Activated naive CD4-positive, alpha-beta T cell treated with anti-CD3 and anti-CD28 coated beads for 36 hours (primary cell): ENCODE measurements at regions of chr6 and their contacts with region 1.

Region 1: GRCh38 chr6:131281471-131282270 is 146.4 kb downstream of the AKAP7 start:
- DNase-seq: peak; percentile 84
- H3K4me3 Mint-ChIP-seq: peak overlapping the region; percentile 75
- H3K27ac Mint-ChIP-seq: peak overlapping the region; percentile 96
- H3K4me1 Mint-ChIP-seq: peaks cover 48% of the 10 kb centered on the region
- H3K27me3 Mint-ChIP-seq: no peaks in the 10 kb centered on the region

Region 2: GRCh38 chr6:131135244-131136020 is 146.2 kb before region 1 on chr6 and contains the start of gene AKAP7:
- CTCF ChIA-PET with region 1: no interaction called
- intact Hi-C with region 1: loop called (anchors 5 kb)
- DNase-seq: peak; percentile 67
- H3K4me3 Mint-ChIP-seq: peak within 1 kb of the TSS; percentile 85
- H3K27ac Mint-ChIP-seq: peak within 1 kb of the TSS; percentile 83
- H3K4me1 Mint-ChIP-seq: peaks cover 13% of the 10 kb centered on the region
- H3K27me3 Mint-ChIP-seq: no peaks in the 10 kb centered on the region
- total RNA-seq, gene AKAP7: 7.3 to 7.5 TPM

Region 3: DNA sequence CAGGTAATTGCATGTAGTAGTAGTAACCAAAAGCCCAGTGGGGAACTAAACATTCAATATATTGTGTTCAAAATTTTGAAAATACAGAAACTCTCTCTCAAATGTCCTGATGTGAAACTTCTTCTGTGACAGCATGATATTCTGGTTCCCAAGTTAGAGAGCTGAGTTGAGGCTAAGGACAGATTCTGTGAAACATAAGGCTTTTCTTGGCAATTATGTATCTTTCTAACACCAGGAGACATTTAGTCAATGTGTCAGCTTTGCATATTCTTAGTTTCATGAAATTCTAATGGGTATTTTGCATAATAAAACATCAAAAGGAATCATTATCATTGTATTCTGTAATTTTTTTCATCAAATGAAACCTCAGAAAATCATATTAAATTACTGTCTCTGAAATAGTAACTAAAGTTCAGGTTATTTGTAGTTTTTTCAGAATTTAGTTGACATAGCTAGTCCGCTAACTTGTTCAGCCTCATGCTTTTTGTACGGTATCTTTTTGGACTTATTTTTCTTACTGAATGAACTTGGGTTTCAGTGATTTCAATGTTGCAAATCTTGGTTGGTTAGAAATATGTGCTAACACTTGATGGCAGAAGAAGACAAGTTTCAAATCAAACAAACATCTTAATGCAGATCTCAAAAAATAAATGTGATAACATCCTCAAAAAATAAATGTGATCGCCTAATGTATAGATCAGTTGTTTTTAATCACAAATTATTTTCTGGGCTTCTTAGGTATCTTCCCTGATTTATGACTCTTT is 76.0 kb before region 1 on chr6:
- CTCF ChIA-PET with region 1: interaction called, 6 read pairs
- intact Hi-C with region 1: loop called (anchors 2 kb)
- DNase-seq: no peak
- H3K4me3 Mint-ChIP-seq: peak overlapping the region; percentile 0
- H3K27ac Mint-ChIP-seq: peak overlapping the region; percentile 36
- H3K4me1 Mint-ChIP-seq: peaks cover 58% of the 10 kb centered on the region
- H3K27me3 Mint-ChIP-seq: no peaks in the 10 kb centered on the region

Region 4: GRCh38 chr6:131250122-131250521 is 31.5 kb before region 1 on chr6:
- CTCF ChIA-PET with region 1: no interaction called
- intact Hi-C with region 1: loop called (anchors 2 kb)
- DNase-seq: peak; percentile 39
- H3K4me3 Mint-ChIP-seq: peak overlapping the region; percentile 59
- H3K27ac Mint-ChIP-seq: no peak overlapping the region
- H3K4me1 Mint-ChIP-seq: peaks cover 42% of the 10 kb centered on the region
- H3K27me3 Mint-ChIP-seq: no peaks in the 10 kb centered on the region

Region 5: DNA sequence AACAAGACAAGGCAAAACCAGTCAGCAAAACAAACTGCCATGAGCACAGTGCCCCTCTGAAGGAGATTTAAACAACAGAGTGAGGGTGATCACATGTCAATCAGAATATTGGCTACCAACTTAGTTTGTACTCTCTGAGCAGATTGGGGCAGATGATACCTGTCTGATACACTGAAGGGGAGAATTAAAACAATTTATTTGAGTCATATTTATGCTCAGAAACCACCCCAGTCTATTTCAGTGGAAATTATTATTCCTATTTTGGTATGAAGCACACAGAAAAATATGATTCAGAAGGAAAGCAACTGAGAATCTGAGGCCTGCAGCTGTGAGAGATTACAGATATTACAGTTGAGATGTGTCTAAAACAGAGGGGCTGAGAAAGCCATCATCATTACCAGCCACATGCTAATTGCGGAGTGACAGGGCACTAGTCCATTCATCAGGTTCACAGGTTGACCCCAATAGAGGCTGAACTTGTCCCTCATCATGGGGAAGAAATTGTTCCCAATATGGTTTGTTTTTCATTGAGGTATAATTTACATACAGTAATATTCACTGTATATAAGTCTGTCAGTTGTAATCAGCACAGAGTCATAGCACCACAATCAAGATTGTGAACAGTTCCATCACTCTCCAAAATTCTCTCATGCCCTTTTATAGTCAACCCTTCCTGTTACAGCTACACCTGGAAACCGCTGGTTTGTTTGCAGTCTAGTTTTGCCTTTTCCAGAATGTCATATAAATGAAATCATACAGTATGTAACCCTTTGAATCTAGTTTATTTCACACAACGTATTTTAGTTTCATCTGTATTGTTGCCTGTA is 11.9 kb before region 1 on chr6:
- CTCF ChIA-PET with region 1: no interaction called
- intact Hi-C with region 1: loop called (anchors 1 kb)
- DNase-seq: peak; percentile 26
- H3K4me3 Mint-ChIP-seq: no peak overlapping the region
- H3K27ac Mint-ChIP-seq: peak overlapping the region; percentile 67
- H3K4me1 Mint-ChIP-seq: peaks cover 42% of the 10 kb centered on the region
- H3K27me3 Mint-ChIP-seq: no peaks in the 10 kb centered on the region

Region 6: DNA sequence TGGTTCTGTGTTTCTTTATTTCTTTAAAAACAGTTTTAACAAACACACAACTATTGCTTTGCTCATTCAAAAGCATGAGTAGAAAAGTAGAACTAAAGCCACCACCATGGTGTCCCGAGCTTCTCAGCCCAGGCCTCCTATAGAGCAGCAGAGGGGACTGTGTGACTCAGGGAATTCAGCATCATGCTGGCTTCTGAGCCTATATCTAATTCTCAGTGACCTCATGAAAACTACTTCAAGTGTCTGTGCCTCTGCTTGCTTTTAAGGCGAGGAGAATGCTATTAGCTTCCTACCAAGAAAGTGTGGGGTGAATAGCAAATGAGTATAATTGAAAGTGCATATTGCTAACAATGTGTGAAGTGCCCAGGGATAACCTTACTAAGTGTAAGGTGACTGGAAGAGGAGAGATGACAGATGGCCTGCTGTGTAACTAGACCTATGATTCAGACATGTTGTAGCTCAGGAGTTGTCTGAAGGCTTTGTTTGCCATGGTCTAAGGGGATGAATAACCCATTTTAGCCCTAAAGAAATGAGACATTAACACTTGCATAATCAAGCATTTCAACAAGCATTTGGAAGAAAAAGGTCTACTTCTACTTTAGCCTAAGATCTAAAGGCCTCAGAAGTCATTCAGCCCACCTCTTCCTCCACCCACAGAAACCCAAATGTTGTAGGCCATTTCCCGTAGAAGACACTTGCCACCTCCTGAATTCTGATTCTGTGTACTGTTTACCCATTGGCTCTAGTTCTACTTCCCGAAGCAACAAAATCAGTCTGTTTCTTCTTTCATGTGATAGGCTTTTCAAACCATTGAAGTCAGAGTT is 169.9 kb after region 1 on chr6:
- CTCF ChIA-PET with region 1: no interaction called
- intact Hi-C with region 1: loop called (anchors 2 kb)
- DNase-seq: peak; percentile 31
- H3K4me3 Mint-ChIP-seq: no peak overlapping the region
- H3K27ac Mint-ChIP-seq: peak overlapping the region; percentile 83
- H3K4me1 Mint-ChIP-seq: peaks cover 40% of the 10 kb centered on the region
- H3K27me3 Mint-ChIP-seq: no peaks in the 10 kb centered on the region

Region 7: DNA sequence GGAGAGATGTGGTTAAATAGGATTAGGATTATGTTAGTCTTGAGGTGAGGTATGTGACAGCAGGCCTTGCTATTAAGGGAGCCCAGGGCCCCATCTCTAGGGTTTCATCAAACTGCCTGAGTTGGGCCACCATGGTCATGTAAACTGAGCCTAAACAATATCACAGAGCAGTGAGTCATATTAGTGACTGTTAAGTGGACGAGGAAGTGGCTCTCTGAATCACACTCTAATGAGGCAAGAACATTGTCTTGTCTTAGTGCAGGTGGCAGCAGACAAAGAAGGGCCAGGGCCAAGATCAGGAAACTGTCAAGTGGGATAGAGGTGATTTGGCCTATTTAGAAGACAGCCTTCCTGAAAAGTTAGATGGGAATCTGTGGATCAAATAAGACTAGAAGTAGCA is 378.5 kb after region 1 on chr6:
- CTCF ChIA-PET with region 1: no interaction called
- intact Hi-C with region 1: no loop called
- DNase-seq: no peak
- H3K4me3 Mint-ChIP-seq: no peak overlapping the region
- H3K27ac Mint-ChIP-seq: no peak overlapping the region
- H3K4me1 Mint-ChIP-seq: no peaks in the 10 kb centered on the region
- H3K27me3 Mint-ChIP-seq: no peaks in the 10 kb centered on the region